ENCODE measurements at regions of chr9 and their contacts with region 1.

Region 1: DNA sequence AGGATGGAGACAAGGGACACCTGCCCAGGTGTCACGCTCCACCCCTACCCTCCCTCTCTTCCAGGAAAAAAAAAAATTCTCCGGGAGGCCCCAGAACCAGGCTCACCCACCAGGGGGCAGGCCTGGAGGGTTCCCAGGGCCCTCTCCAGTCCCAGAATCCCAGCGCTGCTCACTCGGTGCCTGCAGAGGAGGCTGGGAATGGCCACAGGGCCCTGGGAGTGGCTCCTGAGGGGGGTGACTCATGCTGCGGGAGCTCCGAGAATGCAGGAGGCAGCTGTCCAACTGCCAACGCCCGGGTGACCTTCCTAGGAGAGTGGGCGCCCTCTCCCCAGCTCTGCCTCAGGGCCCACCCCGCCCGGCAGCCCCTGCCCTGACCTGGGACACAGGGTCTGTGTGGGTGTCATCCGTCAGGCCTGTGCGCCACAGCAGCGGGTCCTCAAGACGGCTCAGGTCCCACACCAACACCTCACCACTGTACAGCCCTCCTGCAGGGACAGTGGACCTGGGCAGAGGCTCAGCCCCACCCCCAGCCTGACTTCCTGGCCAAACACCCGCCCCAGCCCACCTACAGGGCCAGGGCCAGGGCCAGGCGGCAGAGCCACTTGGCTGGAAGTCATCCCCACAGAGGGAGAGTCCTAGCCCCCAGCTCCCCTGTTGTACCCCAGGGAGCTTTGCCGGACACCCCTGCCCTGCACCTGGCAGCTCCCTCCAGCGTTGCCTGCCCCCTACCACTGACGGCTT is 21.2 kb downstream of the DYNC2I2 start:
- DNase-seq: peak; percentile 99
- H3K27ac ChIP-seq: peak overlapping the region; percentile 99
- CTCF ChIP-seq: peak; percentile 98

Region 2: GRCh38 chr9:128521956-128522355 is 113.5 kb before region 1 on chr9:
- CTCF ChIA-PET with region 1: no interaction called
- POLR2A ChIA-PET with region 1: no interaction called
- DNase-seq: no peak
- H3K27ac ChIP-seq: 0 out of 2 replicates have a peak overlapping the region, but pooled peaks have one; percentile 4
- CTCF ChIP-seq: no peak

Region 3: DNA sequence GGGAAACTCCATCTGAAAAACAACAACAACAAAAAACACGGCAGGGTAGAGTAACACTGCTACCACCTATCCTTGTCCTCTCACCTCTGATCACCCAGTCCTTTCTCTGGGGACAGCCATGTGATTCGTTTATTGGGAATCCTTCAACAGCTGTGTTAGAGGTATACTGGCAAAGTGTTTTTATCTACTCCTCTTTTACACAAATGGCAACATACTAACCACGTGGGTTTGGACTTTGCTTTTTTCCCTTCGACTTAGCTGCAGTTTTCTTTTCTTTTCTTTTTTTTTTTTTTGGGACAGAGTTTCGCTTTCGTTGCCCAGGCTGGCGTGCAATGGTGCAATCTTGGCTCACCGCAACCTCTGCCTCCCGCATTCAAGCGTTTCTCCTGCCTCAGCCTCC is 42.3 kb after region 1 on chr9:
- CTCF ChIA-PET with region 1: interaction called, 5 read pairs
- POLR2A ChIA-PET with region 1: interaction called, 10 read pairs
- DNase-seq: no peak
- H3K27ac ChIP-seq: no peak overlapping the region
- CTCF ChIP-seq: no peak

Region 4: GRCh38 chr9:128684279-128685021 is 49.0 kb after region 1 on chr9:
- CTCF ChIA-PET with region 1: interaction called, 20 read pairs
- POLR2A ChIA-PET with region 1: interaction called, 9 read pairs
- DNase-seq: peak; percentile 98
- H3K27ac ChIP-seq: peak overlapping the region; percentile 98
- CTCF ChIP-seq: no peak

Region 5: GRCh38 chr9:128702445-128702948 is 67.0 kb after region 1 on chr9 and contains the start of gene PKN3:
- CTCF ChIA-PET with region 1: interaction called, 10 read pairs
- POLR2A ChIA-PET with region 1: no interaction called
- DNase-seq: peak; percentile 96
- H3K27ac ChIP-seq: peak within 1 kb of the TSS; percentile 81
- CTCF ChIP-seq: peak; percentile 100

Region 6: DNA sequence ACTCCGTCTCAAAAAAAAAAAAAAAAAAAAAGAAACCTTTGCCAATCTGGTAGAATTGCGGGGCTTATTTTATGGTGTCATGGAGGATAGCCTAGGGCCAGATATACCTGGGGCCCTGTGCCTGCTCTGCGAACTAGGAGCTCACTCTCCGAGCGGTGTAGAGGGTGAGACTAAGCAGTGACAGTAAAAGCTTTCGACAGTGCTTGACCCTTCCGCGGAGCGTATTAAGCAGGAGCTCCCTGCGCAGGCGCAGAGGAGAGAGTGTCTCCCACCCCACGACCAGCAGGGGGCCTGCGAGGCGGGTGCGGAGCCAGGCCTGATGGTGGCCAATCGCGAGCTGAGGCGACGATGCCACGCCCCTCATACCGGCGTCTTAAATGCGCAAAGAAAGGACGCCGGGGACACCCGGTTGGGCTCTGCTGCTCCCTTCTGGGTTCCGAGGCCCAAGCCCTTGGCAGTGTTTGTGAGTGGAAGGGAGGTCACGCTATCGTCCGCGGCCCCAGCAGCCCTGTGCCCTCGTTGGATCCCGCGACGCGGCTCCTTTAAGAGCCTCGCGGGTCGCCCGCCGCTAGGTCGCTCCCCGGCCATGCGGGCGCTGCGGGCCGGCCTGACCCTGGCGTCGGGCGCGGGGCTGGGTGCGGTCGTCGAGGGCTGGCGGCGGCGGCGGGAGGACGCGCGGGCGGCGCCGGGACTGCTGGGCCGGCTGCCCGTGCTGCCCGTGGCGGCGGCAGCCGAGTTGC is 182.8 kb after region 1 on chr9 and contains the start of gene ENDOG:
- CTCF ChIA-PET with region 1: interaction called, 12 read pairs
- POLR2A ChIA-PET with region 1: no interaction called
- DNase-seq: peak; percentile 100
- H3K27ac ChIP-seq: peak within 1 kb of the TSS; percentile 87
- CTCF ChIP-seq: peak; percentile 100